ENCODE measurements at regions of chr7 and their contacts with region 1.

Region 1: GRCh38 chr7:113421696-113422330 is 303.5 kb upstream of the SMIM30 start:
- DNase-seq: peak; percentile 80
- H3K4me3 ChIP-seq: no peak overlapping the region
- H3K27ac ChIP-seq: no peak overlapping the region
- H3K4me1 ChIP-seq: no peaks in the 10 kb centered on the region
- H3K27me3 ChIP-seq: no peaks in the 10 kb centered on the region
- CTCF ChIP-seq: peak; percentile 61 to 82 (median 80)
- EP300 ChIP-seq: no peak
- POLR2A ChIP-seq: no peak

Region 2: GRCh38 chr7:112735261-112735660 is 686.6 kb before region 1 on chr7:
- intact Hi-C with region 1: no loop called
- DNase-seq: no peak
- H3K4me3 ChIP-seq: no peak overlapping the region
- H3K27ac ChIP-seq: no peak overlapping the region
- H3K4me1 ChIP-seq: no peaks in the 10 kb centered on the region
- H3K27me3 ChIP-seq: no peaks in the 10 kb centered on the region
- CTCF ChIP-seq: no peak
- EP300 ChIP-seq: no peak
- POLR2A ChIP-seq: no peak

Region 3: GRCh38 chr7:113015032-113015645 is 406.7 kb before region 1 on chr7:
- intact Hi-C with region 1: loop called (anchors 5 kb)
- DNase-seq: no peak
- H3K4me3 ChIP-seq: no peak overlapping the region
- H3K27ac ChIP-seq: no peak overlapping the region
- H3K4me1 ChIP-seq: no peaks in the 10 kb centered on the region
- H3K27me3 ChIP-seq: no peaks in the 10 kb centered on the region
- CTCF ChIP-seq: peak in 2 of 4 experiments; percentile 19 to 44
- EP300 ChIP-seq: no peak
- POLR2A ChIP-seq: no peak

Region 4: DNA sequence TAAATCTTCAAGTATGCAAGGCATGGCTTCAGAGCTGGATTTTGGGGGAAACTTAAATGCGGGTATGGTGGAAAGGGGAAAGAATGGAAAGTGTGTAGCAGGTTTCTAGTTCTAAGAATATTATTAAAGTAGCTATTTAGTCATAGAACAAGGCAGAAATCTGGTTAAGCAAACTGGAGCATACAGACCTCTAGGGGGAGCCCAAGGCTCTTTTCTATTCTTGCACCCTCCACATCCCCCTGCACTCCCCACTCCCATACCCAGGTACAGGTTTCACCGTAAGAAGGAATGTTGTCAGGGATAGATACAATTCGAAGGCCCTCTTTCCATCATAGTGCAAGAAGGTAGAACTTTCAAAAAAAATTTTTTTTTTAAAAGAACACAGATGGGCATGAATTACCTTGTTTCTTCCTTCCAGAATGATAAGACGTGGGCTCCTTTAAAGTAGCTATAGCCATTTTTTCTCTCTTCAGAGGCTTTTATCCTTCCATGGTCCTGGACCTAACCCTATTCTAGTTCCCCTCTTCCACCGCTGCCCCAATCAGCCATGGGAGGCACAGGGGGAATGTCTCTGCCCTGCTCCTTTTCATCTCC is 262.0 kb before region 1 on chr7:
- intact Hi-C with region 1: loop called (anchors 10 kb)
- DNase-seq: no peak
- H3K4me3 ChIP-seq: no peak overlapping the region
- H3K27ac ChIP-seq: no peak overlapping the region
- H3K4me1 ChIP-seq: no peaks in the 10 kb centered on the region
- H3K27me3 ChIP-seq: no peaks in the 10 kb centered on the region
- CTCF ChIP-seq: peak in 2 of 4 experiments; percentile 20 to 30
- EP300 ChIP-seq: no peak
- POLR2A ChIP-seq: no peak